Left colon (tissue), 2 donors: ENCODE measurements at regions of chr10 and their contacts with region 1.

Region 1: GRCh38 chr10:86706401-86706841 is 38.1 kb downstream of the LDB3 start:
- DNase-seq: no peak
- ATAC-seq: no peak

Region 2: DNA sequence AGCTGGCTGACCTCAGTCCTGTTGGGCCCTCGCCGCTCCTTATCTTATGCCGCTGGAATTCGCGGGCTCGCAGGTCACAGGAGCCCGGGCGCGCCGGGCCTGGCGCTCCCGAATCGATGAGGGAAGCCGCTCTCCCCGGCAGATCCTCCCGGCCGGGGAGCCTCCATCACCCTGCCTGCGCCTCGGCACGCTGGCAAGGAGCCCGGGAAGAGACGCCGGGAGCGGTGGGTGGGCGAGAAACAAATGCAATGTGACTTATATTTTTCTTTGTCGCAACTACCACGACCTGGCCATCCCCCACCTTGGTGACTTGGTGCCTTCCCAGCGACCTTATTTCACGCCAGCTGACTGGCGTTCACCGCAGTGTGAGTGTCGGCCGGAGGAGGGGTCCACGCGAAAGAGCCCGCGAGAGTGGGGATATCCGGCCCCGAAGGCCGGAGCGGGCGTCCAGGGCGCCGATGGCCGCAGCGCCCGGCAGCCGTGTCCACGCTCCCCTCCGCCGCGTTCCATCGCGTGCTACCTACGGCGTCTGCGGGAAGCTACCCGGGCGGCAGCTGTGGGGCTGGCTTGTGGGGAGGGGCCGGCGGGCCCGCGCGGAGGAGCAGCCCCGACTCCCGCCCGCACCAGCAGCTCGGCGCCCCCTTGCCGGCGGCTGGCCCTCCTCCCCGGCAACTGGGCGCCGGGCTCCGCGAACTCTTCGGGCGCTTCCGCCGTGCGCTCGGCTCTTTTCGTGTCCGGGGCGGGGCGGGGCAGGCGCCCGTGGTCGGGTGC is 49.5 kb after region 1 on chr10:
- intact Hi-C with region 1: no loop called
- DNase-seq: peak; percentile 86 to 92
- ATAC-seq: peak; percentile 79

Region 3: DNA sequence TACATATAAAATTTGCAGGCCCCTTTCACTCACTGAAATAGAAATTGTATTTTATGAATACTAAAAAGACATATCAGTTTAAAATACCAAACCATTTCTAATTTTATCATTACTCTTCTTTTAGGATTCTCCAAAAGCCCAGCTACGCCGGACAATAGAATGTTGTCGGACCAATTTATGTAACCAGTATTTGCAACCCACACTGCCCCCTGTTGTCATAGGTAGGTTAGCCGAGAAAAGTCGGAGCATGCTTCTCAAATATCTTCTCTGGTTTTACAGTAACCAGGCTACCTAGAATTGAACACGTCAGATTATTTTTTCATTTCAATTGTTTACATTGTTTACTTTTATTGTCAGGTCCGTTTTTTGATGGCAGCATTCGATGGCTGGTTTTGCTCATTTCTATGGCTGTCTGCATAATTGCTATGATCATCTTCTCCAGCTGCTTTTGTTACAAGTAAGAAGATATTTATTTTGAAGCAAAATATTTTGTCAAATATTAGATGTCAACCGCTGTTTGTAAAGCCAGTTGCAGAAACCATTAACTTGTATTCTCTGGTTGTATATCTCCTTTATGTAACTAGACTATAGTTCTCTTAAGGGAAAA is 193.4 kb after region 1 on chr10:
- intact Hi-C with region 1: loop called in 1 of 2 experiments (anchors 5 kb)
- DNase-seq: peak; percentile 48 to 69
- ATAC-seq: peak; percentile 86

Region 4: DNA sequence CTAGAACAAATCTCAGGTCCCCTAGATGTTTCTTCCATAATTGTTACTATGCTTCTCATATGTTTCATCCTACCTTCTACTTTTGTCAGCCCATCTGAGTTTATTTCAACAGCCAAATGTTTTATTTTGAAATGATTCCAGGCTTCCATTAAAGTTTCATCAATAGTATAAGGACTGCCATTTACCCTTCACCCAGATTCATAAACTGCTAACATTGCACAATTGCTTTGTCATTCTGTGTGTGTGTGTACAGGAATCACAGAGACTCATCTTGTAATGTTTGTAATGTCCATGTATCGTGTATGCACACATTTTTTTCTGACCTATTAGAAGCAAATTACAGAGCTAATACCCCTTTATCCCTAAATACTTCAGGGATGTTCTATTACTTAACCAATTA is 225.5 kb after region 1 on chr10:
- intact Hi-C with region 1: no loop called
- DNase-seq: no peak
- ATAC-seq: peak; percentile 50